ENCODE measurements at regions of chr16 and their contacts with region 1.

Region 1: GRCh38 chr16:29848420-29849297 is 14.4 kb downstream of the CDIPT start:
- DNase-seq: peak; percentile 79 to 83 (median 80)
- H3K4me3 ChIP-seq: no peak overlapping the region
- H3K4me3 Mint-ChIP-seq: no peak overlapping the region
- H3K27ac ChIP-seq: no peak overlapping the region
- H3K27ac Mint-ChIP-seq: peak overlapping the region; percentile 13 to 89 (median 60)
- H3K4me1 ChIP-seq: peaks cover 6% of the 10 kb centered on the region
- H3K4me1 Mint-ChIP-seq: peaks cover 1 to 7% (median 4%) of the 10 kb centered on the region in 4 donors
- H3K27me3 ChIP-seq: no peaks in the 10 kb centered on the region
- H3K27me3 Mint-ChIP-seq: no peaks in the 10 kb centered on the region

Region 2: GRCh38 chr16:29664091-29664921 is 184.4 kb before region 1 on chr16:
- CTCF ChIA-PET with region 1: no interaction called
- POLR2A ChIA-PET with region 1: no interaction called
- intact Hi-C with region 1: no loop called
- DNase-seq: peak; percentile 46 to 69 (median 51)
- H3K4me3 ChIP-seq: peak overlapping the region; percentile 78 to 95
- H3K4me3 Mint-ChIP-seq: peak overlapping the region; percentile 97 to 99 (median 99)
- H3K27ac ChIP-seq: peak overlapping the region; percentile 82
- H3K27ac Mint-ChIP-seq: peak overlapping the region; percentile 94 to 100 (median 97)
- H3K4me1 ChIP-seq: peaks cover 69% of the 10 kb centered on the region
- H3K4me1 Mint-ChIP-seq: peaks cover 35 to 91% (median 56%) of the 10 kb centered on the region in 4 donors
- H3K27me3 ChIP-seq: no peaks in the 10 kb centered on the region
- H3K27me3 Mint-ChIP-seq: peaks cover 0 to 3% of the 10 kb centered on the region in 2 donors

Region 3: GRCh38 chr16:29729116-29729521 is 119.5 kb before region 1 on chr16:
- CTCF ChIA-PET with region 1: interaction called, 11 read pairs
- POLR2A ChIA-PET with region 1: no interaction called
- intact Hi-C with region 1: no loop called
- DNase-seq: no peak
- H3K4me3 ChIP-seq: no peak overlapping the region
- H3K4me3 Mint-ChIP-seq: peak overlapping the region in 1 of 8 donors; percentile 20
- H3K27ac ChIP-seq: no peak overlapping the region
- H3K27ac Mint-ChIP-seq: peak overlapping the region in 3 of 7 donors; percentile 24 to 66 (median 36)
- H3K4me1 ChIP-seq: peaks cover 14% of the 10 kb centered on the region
- H3K4me1 Mint-ChIP-seq: peaks cover 17 to 32% (median 21%) of the 10 kb centered on the region in 4 donors
- H3K27me3 ChIP-seq: no peaks in the 10 kb centered on the region
- H3K27me3 Mint-ChIP-seq: no peaks in the 10 kb centered on the region

Region 4: DNA sequence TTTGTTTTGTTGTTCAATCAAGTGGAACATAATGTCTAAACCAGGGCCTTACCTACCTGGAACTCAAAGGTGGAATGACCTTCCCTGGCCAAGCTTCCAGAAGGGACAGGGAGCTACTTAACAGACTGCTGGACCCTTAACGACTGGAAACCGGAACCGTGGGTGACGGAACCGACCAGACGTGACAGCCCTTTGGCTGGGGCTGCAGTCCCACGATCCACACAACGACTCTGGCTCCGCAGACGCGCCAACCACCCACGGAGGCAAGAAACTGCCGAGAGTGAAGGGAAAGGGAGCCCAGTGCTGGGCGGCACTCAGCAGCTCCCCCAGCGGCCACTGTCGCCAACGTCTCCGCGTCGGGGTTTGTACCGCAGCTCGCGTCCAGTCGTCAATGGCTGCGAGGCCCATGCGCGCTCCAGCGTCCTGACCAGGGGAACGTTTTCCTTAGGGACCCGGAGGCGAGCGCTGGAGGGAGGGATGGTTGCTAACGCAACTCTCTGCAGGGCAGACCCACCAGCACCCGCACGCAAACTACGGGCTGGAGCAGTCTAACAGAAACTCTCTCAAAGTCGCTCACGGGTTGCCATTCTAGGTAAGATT is 63.7 kb before region 1 on chr16:
- CTCF ChIA-PET with region 1: interaction called, 22 read pairs
- POLR2A ChIA-PET with region 1: interaction called, 19 read pairs
- intact Hi-C with region 1: loop called (anchors 1 kb)
- DNase-seq: peak; percentile 70 to 77 (median 74)
- H3K4me3 ChIP-seq: peak overlapping the region in 1 of 2 donors; percentile 44
- H3K4me3 Mint-ChIP-seq: peak overlapping the region; percentile 57 to 86 (median 78)
- H3K27ac ChIP-seq: peak overlapping the region; percentile 47
- H3K27ac Mint-ChIP-seq: peak overlapping the region; percentile 33 to 92 (median 87)
- H3K4me1 ChIP-seq: peaks cover 25% of the 10 kb centered on the region
- H3K4me1 Mint-ChIP-seq: peaks cover 12 to 30% (median 24%) of the 10 kb centered on the region in 4 donors
- H3K27me3 ChIP-seq: no peaks in the 10 kb centered on the region
- H3K27me3 Mint-ChIP-seq: no peaks in the 10 kb centered on the region

Region 5: GRCh38 chr16:29815793-29816693 is 32.6 kb before region 1 on chr16 and contains the start of gene PAGR1:
- CTCF ChIA-PET with region 1: interaction called, 129 read pairs
- POLR2A ChIA-PET with region 1: interaction called, 34 read pairs
- intact Hi-C with region 1: loop called (anchors 1 kb)
- DNase-seq: peak; percentile 99 to 100 (median 99)
- H3K4me3 ChIP-seq: peak within 1 kb of the TSS; percentile 91 to 95
- H3K4me3 Mint-ChIP-seq: peak within 1 kb of the TSS; percentile 95 to 99 (median 98)
- H3K27ac ChIP-seq: peak within 1 kb of the TSS; percentile 77
- H3K27ac Mint-ChIP-seq: peak within 1 kb of the TSS; percentile 94 to 100 (median 98)
- H3K4me1 ChIP-seq: peaks cover 66% of the 10 kb centered on the region
- H3K4me1 Mint-ChIP-seq: peaks cover 30 to 87% (median 56%) of the 10 kb centered on the region in 4 donors
- H3K27me3 ChIP-seq: no peaks in the 10 kb centered on the region
- H3K27me3 Mint-ChIP-seq: peaks cover 0 to 2% of the 10 kb centered on the region in 2 donors
- total RNA-seq, gene PAGR1: 43.7 to 44.9 TPM

Region 6: DNA sequence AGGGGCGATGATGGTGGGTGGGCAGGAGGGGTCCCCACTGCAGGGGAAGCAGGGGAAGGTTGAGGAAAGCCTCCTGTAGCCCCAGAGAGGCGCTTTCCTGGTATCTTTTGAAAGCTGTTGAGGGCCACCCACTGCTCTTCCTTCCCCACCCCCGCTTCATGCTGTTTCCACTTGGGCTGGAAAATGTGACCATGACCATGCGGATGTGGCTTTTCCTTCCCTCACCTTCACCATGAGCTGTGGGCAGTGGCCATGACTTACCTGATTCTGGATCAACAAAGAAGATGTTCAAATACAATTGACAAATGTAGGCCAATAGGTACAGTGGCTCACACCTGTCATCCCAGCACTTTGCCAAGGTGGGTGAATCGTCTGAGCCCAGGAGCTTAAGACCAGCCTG is 14.6 kb before region 1 on chr16:
- CTCF ChIA-PET with region 1: interaction called, 71 read pairs
- POLR2A ChIA-PET with region 1: interaction called, 41 read pairs
- intact Hi-C with region 1: no loop called
- DNase-seq: peak in 1 of 5 donors; percentile 17
- H3K4me3 ChIP-seq: no peak overlapping the region
- H3K4me3 Mint-ChIP-seq: no peak overlapping the region
- H3K27ac ChIP-seq: no peak overlapping the region
- H3K27ac Mint-ChIP-seq: peak overlapping the region in 3 of 7 donors; percentile 42 to 70 (median 65)
- H3K4me1 ChIP-seq: peaks cover 14% of the 10 kb centered on the region
- H3K4me1 Mint-ChIP-seq: peaks cover 8 to 26% (median 14%) of the 10 kb centered on the region in 4 donors
- H3K27me3 ChIP-seq: no peaks in the 10 kb centered on the region
- H3K27me3 Mint-ChIP-seq: no peaks in the 10 kb centered on the region

Region 7: DNA sequence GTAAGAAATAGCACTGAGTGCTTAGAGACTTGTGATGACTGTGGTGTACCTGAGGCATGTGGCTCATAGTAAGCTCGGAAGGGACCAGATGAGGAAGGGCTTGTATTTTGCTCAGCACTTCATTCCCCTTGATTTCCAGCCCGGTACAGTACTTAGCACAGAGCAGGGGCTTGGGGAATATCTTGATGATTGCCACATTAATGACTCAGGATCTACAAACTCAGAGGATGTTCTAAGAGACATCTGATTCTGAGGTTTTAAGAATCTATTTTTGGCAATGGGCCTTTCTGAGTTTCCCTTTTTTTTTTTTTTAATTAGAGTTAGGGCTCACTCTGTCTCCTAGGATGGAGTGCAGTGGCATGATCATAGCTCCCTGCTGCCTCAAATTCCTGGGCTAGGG is 60.7 kb after region 1 on chr16:
- CTCF ChIA-PET with region 1: no interaction called
- POLR2A ChIA-PET with region 1: no interaction called
- intact Hi-C with region 1: no loop called
- DNase-seq: no peak
- H3K4me3 ChIP-seq: no peak overlapping the region
- H3K4me3 Mint-ChIP-seq: no peak overlapping the region
- H3K27ac ChIP-seq: no peak overlapping the region
- H3K27ac Mint-ChIP-seq: peak overlapping the region in 1 of 7 donors; percentile 31
- H3K4me1 ChIP-seq: no peaks in the 10 kb centered on the region
- H3K4me1 Mint-ChIP-seq: peaks cover 0 to 5% (median 1%) of the 10 kb centered on the region in 4 donors
- H3K27me3 ChIP-seq: no peaks in the 10 kb centered on the region
- H3K27me3 Mint-ChIP-seq: no peaks in the 10 kb centered on the region

Region 8: DNA sequence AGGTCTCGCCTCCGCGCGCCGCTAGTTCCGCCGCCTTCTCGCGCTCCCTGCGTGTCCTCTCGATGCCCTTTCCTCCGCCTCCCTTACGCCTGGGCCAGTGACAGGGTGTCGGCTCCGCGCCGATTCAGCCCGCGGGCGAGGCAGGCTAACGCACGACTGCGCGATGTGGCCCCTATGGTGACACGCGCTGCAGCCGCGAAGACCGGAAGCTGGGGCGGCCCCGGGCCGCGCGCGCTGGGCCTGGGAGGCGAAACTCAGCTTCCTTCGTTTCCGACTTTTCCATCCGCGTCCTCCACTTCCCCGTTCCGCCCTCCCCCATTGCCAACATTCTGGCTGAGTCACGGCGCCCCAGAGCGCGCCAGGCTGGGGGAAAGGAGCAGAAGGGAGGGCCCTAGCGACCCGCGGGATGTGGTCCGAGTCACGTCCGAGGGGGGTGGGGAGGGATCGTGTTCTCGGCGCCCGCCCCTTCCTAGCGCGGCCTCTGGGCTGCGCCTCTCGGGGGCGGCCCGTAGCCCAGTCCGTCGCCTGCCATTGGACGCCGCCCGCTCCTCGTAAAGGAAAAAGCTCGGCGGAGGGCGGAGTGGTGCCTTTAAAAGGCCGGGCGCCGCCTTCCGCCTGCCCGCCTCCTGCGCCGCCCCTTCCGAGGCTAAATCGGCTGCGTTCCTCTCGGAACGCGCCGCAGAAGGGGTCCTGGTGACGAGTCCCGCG is 216.6 kb after region 1 on chr16 and contains the start of gene ALDOA:
- CTCF ChIA-PET with region 1: no interaction called
- POLR2A ChIA-PET with region 1: no interaction called
- intact Hi-C with region 1: no loop called
- DNase-seq: peak; percentile 94 to 96 (median 94)
- H3K4me3 ChIP-seq: peak within 1 kb of the TSS; percentile 77 to 93
- H3K4me3 Mint-ChIP-seq: peak within 1 kb of the TSS; percentile 98 to 100 (median 99)
- H3K27ac ChIP-seq: peak within 1 kb of the TSS; percentile 94
- H3K27ac Mint-ChIP-seq: peak within 1 kb of the TSS; percentile 95 to 100 (median 97)
- H3K4me1 ChIP-seq: peaks cover 47% of the 10 kb centered on the region
- H3K4me1 Mint-ChIP-seq: peaks cover 17 to 58% (median 33%) of the 10 kb centered on the region in 4 donors
- H3K27me3 ChIP-seq: no peaks in the 10 kb centered on the region
- H3K27me3 Mint-ChIP-seq: no peaks in the 10 kb centered on the region
- total RNA-seq, gene ALDOA: 558 to 563 TPM

Measured in CD4-positive, alpha-beta memory T cell (primary cell).